Activated CD8-positive, alpha-beta T cell treated with anti-CD3 and anti-CD28 coated beads, Interleukin-2, amount 10 ng/mL, durations not matched to agents 7 days and 5 days (primary cell): ENCODE measurements at regions of chr5 and their contacts with region 1.

Region 1: DNA sequence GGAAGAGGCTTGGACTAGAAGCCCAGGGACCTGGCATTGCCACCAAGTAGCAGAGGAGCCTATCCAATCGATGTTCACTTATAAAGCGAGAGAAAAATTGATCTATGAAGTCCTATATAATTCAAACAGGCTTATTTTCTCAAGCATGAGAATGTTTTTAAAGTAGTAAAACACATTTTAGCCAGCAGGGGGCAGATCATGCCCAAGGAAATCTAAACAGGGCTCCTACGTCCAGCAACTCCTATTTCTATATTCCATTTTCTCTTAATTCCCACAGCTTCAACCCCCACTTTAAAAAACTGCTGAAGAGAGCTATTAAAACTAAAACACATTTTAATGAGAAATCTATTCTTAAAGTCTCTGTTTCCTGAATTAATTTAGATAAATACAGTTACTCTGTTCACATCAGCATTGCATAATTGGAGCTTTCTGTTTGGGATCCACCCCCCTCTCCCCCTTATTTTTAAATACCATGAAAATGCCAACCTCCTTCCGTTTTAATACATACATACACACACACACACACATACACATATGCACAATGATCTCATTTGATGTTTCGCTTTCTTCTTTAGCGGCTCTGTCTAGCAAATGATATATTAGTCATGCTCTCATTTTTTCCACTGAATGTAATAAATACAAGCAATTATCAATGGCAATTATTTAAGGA is 144.9 kb downstream of the MYO10 start:
- DNase-seq: peak; percentile 42
- ATAC-seq: no peak
- H3K4me3 Mint-ChIP-seq: no peak overlapping the region
- H3K27ac Mint-ChIP-seq: no peak overlapping the region
- H3K4me1 Mint-ChIP-seq: no peaks in the 10 kb centered on the region
- H3K27me3 Mint-ChIP-seq: peaks cover 2% of the 10 kb centered on the region

Region 2: GRCh38 chr5:17132444-17133083 is 341.4 kb after region 1 on chr5:
- CTCF ChIA-PET with region 1: interaction called, 12 read pairs
- POLR2A ChIA-PET with region 1: no interaction called
- DNase-seq: no peak
- ATAC-seq: no peak
- H3K4me3 Mint-ChIP-seq: no peak overlapping the region
- H3K27ac Mint-ChIP-seq: no peak overlapping the region
- H3K4me1 Mint-ChIP-seq: peaks cover 11% of the 10 kb centered on the region
- H3K27me3 Mint-ChIP-seq: peaks cover 2% of the 10 kb centered on the region